ENCODE measurements at regions of chr1 and their contacts with region 1.

Region 1: GRCh38 chr1:170967042-170967910 is 31.9 kb downstream of the MROH9 start:
- DNase-seq: no peak
- H3K4me3 ChIP-seq: no peak overlapping the region
- H3K27ac ChIP-seq: no peak overlapping the region
- H3K4me1 ChIP-seq: no peaks in the 10 kb centered on the region
- H3K27me3 ChIP-seq: no peaks in the 10 kb centered on the region
- CTCF ChIP-seq: peak in 2 of 3 experiments; percentile 57 to 62; a peak in 3 of 4 replicates
- EP300 ChIP-seq: no peak
- POLR2A ChIP-seq: no peak
- RAD21 ChIP-seq: peak; percentile 78 to 81

Region 2: GRCh38 chr1:170881268-170882265 is 85.7 kb before region 1 on chr1:
- CTCF ChIA-PET with region 1: no interaction called
- POLR2A ChIA-PET with region 1: no interaction called
- DNase-seq: no peak
- H3K4me3 ChIP-seq: no peak overlapping the region
- H3K27ac ChIP-seq: no peak overlapping the region
- H3K4me1 ChIP-seq: no peaks in the 10 kb centered on the region
- H3K27me3 ChIP-seq: no peaks in the 10 kb centered on the region
- CTCF ChIP-seq: peak in 2 of 3 experiments; percentile 19 to 34; a peak in 2 of 4 replicates
- EP300 ChIP-seq: no peak
- POLR2A ChIP-seq: no peak
- RAD21 ChIP-seq: peak; percentile 57 to 65

Region 3: DNA sequence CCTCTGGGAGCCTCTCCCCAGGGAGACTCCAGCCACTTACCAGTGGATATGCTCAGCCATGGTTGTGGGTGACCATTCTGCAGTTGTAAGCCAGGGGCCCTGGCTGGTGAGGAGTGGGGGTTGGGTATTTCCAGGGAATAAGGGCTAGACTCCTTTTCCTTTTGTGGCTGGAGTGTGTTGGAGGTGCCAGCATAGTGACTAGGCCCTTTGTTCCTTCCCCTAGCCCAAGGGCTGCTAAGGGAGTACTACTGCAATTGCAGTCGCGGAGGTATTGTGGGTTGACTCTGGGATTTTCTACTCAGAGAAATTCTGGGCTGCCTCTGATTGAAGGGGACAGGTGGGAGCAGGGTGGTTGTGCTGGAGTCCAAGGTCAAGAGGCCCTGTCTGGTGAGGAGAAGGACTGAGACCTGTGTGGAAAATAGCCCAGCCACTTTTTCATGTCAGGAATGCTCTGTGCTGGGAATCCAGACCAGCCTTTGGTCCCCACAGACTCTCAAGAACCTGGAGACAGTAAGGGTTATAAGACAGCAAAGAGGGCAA is 11.2 kb after region 1 on chr1:
- CTCF ChIA-PET with region 1: interaction called, 20 read pairs
- POLR2A ChIA-PET with region 1: no interaction called
- DNase-seq: no peak
- H3K4me3 ChIP-seq: no peak overlapping the region
- H3K27ac ChIP-seq: no peak overlapping the region
- H3K4me1 ChIP-seq: no peaks in the 10 kb centered on the region
- H3K27me3 ChIP-seq: no peaks in the 10 kb centered on the region
- CTCF ChIP-seq: no peak
- EP300 ChIP-seq: no peak
- POLR2A ChIP-seq: no peak
- RAD21 ChIP-seq: no peak

Region 4: GRCh38 chr1:171081314-171081753 is 114.1 kb after region 1 on chr1:
- CTCF ChIA-PET with region 1: interaction called, 17 read pairs
- POLR2A ChIA-PET with region 1: no interaction called
- DNase-seq: no peak
- H3K4me3 ChIP-seq: no peak overlapping the region
- H3K27ac ChIP-seq: no peak overlapping the region
- H3K4me1 ChIP-seq: no peaks in the 10 kb centered on the region
- H3K27me3 ChIP-seq: no peaks in the 10 kb centered on the region
- CTCF ChIP-seq: peak in 2 of 3 experiments; percentile 25 to 32; a peak in 2 of 4 replicates
- EP300 ChIP-seq: no peak
- POLR2A ChIP-seq: no peak
- RAD21 ChIP-seq: peak; percentile 54 to 58

Region 5: DNA sequence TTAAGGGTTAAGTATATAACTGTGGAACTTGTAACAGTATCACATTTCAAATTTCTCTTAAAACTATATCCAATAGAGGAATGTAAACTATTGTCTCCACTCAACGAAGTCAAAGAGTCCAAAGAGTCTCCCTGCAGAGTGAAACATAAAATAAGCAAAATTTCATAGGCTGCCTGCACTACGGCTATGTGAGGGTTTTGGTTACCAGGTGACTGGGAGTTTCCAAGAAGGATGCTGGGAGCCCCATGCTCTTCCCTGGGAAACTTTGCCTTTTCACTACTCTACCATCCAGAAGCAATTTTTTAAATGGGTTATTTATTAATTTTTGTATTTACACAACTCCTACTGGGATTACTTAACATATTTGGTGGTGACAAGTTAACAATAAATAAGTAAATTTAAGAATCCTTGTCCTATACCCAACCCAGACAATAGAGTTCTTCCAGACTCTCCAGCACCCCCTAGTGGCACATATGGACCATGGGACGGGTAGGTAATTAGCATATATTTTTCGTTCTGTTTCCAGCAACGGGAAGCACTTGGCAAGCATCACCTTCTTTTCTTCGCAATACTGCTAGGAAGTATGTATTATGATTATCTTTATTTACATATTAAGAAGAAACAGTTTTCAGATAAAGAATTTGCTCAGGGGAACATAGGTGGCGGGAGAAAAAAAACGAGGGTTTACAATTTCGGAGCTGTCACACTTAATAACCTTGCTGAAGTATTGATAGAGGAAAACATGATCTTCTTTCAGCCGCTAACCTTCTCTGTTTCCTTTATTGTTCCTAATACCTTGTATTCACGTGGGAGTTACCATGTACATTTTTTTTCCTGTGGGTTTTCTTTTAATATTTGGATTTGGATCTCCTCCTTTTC is 221.4 kb after region 1 on chr1:
- CTCF ChIA-PET with region 1: interaction called, 11 read pairs
- POLR2A ChIA-PET with region 1: no interaction called
- DNase-seq: peak in 1 of 2 experiments; percentile 63
- H3K4me3 ChIP-seq: no peak overlapping the region
- H3K27ac ChIP-seq: no peak overlapping the region
- H3K4me1 ChIP-seq: no peaks in the 10 kb centered on the region; a peak in 1 of 7 replicates
- H3K27me3 ChIP-seq: no peaks in the 10 kb centered on the region
- CTCF ChIP-seq: peak; percentile 31 to 80 (median 74)
- EP300 ChIP-seq: no peak
- POLR2A ChIP-seq: no peak
- RAD21 ChIP-seq: peak; percentile 69 to 75

Region 6: DNA sequence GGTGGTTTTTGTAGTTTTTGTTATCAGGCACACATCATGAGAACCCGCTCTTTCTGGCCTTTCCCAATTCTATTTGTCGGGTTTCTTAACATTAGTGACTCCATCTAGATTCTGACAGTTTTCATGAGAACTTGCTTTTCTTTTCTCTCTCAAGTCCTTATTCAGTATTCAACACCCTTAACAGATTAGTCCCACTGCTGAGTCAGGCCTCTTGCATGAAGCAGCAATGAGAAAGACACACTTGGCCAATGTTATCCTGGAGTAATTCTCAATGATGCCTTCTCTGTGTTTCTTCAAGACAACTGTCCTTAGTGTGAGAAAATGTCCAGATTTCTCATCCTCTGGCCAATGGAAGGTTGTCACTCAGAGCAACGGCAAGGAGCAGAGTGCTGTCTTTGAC is 229.1 kb after region 1 on chr1:
- CTCF ChIA-PET with region 1: interaction called, 13 read pairs
- POLR2A ChIA-PET with region 1: no interaction called
- DNase-seq: no peak
- H3K4me3 ChIP-seq: no peak overlapping the region
- H3K27ac ChIP-seq: no peak overlapping the region
- H3K4me1 ChIP-seq: no peaks in the 10 kb centered on the region
- H3K27me3 ChIP-seq: no peaks in the 10 kb centered on the region
- CTCF ChIP-seq: no peak
- EP300 ChIP-seq: no peak
- POLR2A ChIP-seq: no peak
- RAD21 ChIP-seq: no peak

Region 7: GRCh38 chr1:171220581-171221054 is 253.3 kb after region 1 on chr1:
- CTCF ChIA-PET with region 1: interaction called, 112 read pairs
- POLR2A ChIA-PET with region 1: no interaction called
- DNase-seq: peak; percentile 67 to 73
- H3K4me3 ChIP-seq: peak overlapping the region; percentile 17 to 54 (median 30); a peak in 6 of 8 replicates
- H3K27ac ChIP-seq: peak overlapping the region; percentile 70
- H3K4me1 ChIP-seq: peaks cover 2 to 19% (median 14%) of the 10 kb centered on the region in 4 experiments; a peak in 6 of 7 replicates
- H3K27me3 ChIP-seq: no peaks in the 10 kb centered on the region
- CTCF ChIP-seq: no peak; a peak in 1 of 4 replicates
- EP300 ChIP-seq: peak in 1 of 2 experiments; percentile 48; a peak in 1 of 3 replicates
- POLR2A ChIP-seq: peak; percentile 36 to 65; a peak in 2 of 3 replicates
- RAD21 ChIP-seq: peak in 1 of 2 experiments; percentile 24; a peak in 1 of 4 replicates

Region 8: DNA sequence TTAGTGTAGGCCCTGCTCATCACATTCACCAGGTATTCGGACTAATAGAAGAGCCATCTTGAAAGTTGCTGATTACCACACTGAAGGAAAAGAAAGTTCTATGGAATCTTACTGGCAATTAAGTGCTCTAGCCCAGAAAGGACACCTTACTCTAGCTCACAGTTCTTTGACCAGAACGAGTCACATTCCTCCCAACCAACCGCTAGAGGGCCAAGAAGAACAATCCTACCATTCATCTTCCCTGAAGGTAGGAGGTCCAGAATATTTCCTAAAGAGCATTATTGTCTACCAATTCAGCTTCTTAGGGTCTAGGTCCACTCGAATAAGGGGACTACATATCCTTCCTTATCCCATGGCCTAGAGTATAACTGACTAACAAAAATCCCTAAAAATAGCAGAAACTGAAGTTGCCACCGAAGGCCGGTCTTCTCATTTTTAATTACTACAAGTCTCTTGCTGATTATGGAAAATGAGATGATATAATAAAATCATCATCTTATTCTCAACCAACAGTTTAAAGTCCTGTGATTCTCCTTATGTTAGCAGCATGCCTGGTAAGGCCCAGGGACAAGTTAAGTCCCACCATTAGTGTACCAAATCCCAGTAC is 278.3 kb after region 1 on chr1:
- CTCF ChIA-PET with region 1: interaction called, 14 read pairs
- POLR2A ChIA-PET with region 1: no interaction called
- DNase-seq: no peak
- H3K4me3 ChIP-seq: no peak overlapping the region
- H3K27ac ChIP-seq: no peak overlapping the region
- H3K4me1 ChIP-seq: peaks cover 0 to 4% (median 0%) of the 10 kb centered on the region in 4 experiments; a peak in 2 of 7 replicates
- H3K27me3 ChIP-seq: no peaks in the 10 kb centered on the region; a peak in 1 of 7 replicates
- CTCF ChIP-seq: peak in 2 of 3 experiments; percentile 78 to 87; a peak in 3 of 4 replicates
- EP300 ChIP-seq: no peak
- POLR2A ChIP-seq: no peak
- RAD21 ChIP-seq: peak; percentile 55 to 72

Measured in H1 (cell line).